Mammary epithelial cell (primary cell): ENCODE measurements at regions of chr11 and their contacts with region 1.

Region 1: GRCh38 chr11:15106201-15106965 is 8.3 kb upstream of the INSC start:
- DNase-seq: peak; percentile 74
- H3K4me3 ChIP-seq: peak overlapping the region in 1 of 3 experiments; percentile 4
- H3K27ac ChIP-seq: peak overlapping the region; percentile 40
- H3K4me1 ChIP-seq: peaks cover 41% of the 10 kb centered on the region
- H3K27me3 ChIP-seq: no peaks in the 10 kb centered on the region
- CTCF ChIP-seq: no peak

Region 2: DNA sequence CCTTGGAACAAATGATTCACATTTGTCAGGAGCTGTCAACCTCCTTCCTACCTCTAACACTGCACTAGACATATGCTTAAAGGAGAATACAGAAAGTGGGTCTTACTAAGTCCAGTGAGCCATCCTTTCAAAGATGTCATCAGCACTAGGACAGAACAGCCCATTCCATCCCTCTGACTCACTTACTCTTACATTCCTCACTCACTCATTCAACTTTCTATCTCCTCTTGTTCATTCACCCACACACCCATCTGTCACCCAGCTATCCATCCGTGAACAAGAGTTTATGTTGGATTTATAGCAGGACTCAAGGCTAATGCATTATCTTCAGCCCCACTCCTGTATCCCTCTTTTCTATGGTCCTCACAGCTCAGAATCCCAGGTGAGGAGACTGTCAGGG is 17.5 kb after region 1 on chr11:
- CTCF ChIA-PET with region 1: no interaction called
- dilution Hi-C with region 1: no loop called
- in situ Hi-C with region 1: no loop called
- intact Hi-C with region 1: loop called (anchors 1 kb)
- DNase-seq: peak; percentile 76
- H3K4me3 ChIP-seq: no peak overlapping the region
- H3K27ac ChIP-seq: no peak overlapping the region
- H3K4me1 ChIP-seq: peaks cover 39% of the 10 kb centered on the region
- H3K27me3 ChIP-seq: no peaks in the 10 kb centered on the region
- CTCF ChIP-seq: no peak